ENCODE measurements at regions of chr6 and their contacts with region 1.

Region 1: DNA sequence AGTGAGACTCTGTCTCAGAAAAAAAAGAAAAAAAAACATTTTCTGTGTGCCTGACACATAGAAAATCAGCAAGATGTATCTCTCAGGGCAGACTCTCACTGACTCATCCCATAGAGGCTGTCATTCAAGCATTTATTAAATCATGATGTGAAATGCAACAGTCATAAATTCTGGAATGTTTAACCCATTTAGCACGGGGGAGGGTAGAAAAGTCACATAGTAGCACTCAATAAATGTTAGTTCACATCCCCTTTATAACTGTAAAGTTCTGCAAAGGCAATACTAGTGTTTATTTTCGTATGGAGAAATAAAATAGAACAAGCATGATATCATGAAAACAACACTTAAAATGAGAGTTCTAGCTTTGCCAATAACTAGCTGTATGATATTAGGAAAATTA is 15.5 kb upstream of the CARMIL1 start:
- H3K4me3 ChIP-seq: no peak overlapping the region
- H3K27ac ChIP-seq: no peak overlapping the region
- H3K4me1 ChIP-seq: no peaks in the 10 kb centered on the region; the same call in 1 of the 2 replicates
- CTCF ChIP-seq: no peak

Region 2: GRCh38 chr6:24855395-24856245 is 408.0 kb before region 1 on chr6:
- CTCF ChIA-PET with region 1: no interaction called
- POLR2A ChIA-PET with region 1: no interaction called
- H3K4me3 ChIP-seq: no peak overlapping the region
- H3K27ac ChIP-seq: no peak overlapping the region
- H3K4me1 ChIP-seq: no peaks in the 10 kb centered on the region
- CTCF ChIP-seq: peak; percentile 67; the same call in 1 of the 2 replicates

Region 3: GRCh38 chr6:24991810-24992467 is 271.7 kb before region 1 on chr6:
- CTCF ChIA-PET with region 1: no interaction called
- POLR2A ChIA-PET with region 1: no interaction called
- H3K4me3 ChIP-seq: no peak overlapping the region
- H3K27ac ChIP-seq: no peak overlapping the region
- H3K4me1 ChIP-seq: no peaks in the 10 kb centered on the region
- CTCF ChIP-seq: peak; percentile 50; the same call in 1 of the 2 replicates

Region 4: GRCh38 chr6:25179051-25179778 is 84.4 kb before region 1 on chr6:
- CTCF ChIA-PET with region 1: no interaction called
- POLR2A ChIA-PET with region 1: no interaction called
- H3K4me3 ChIP-seq: no peak overlapping the region
- H3K27ac ChIP-seq: no peak overlapping the region
- H3K4me1 ChIP-seq: peaks cover 3% of the 10 kb centered on the region; the same call in 1 of the 2 replicates
- CTCF ChIP-seq: no peak

Region 5: GRCh38 chr6:25193460-25194171 is 70.0 kb before region 1 on chr6:
- CTCF ChIA-PET with region 1: no interaction called
- POLR2A ChIA-PET with region 1: no interaction called
- H3K4me3 ChIP-seq: no peak overlapping the region
- H3K27ac ChIP-seq: no peak overlapping the region; the same call in 1 of the 2 replicates
- H3K4me1 ChIP-seq: peaks cover 25% of the 10 kb centered on the region
- CTCF ChIP-seq: no peak

Region 6: GRCh38 chr6:25250878-25251277 is 12.8 kb before region 1 on chr6:
- CTCF ChIA-PET with region 1: interaction called, 35 read pairs
- POLR2A ChIA-PET with region 1: no interaction called
- H3K4me3 ChIP-seq: no peak overlapping the region
- H3K27ac ChIP-seq: no peak overlapping the region
- H3K4me1 ChIP-seq: peaks cover 17% of the 10 kb centered on the region; the same call in 1 of the 2 replicates
- CTCF ChIP-seq: no peak

Region 7: GRCh38 chr6:25312703-25313501 is 49.2 kb after region 1 on chr6:
- CTCF ChIA-PET with region 1: interaction called, 15 read pairs
- POLR2A ChIA-PET with region 1: no interaction called
- H3K4me3 ChIP-seq: no peak overlapping the region
- H3K27ac ChIP-seq: no peak overlapping the region
- H3K4me1 ChIP-seq: peaks cover 22% of the 10 kb centered on the region
- CTCF ChIP-seq: peak; percentile 23; the same call in 1 of the 2 replicates

Region 8: DNA sequence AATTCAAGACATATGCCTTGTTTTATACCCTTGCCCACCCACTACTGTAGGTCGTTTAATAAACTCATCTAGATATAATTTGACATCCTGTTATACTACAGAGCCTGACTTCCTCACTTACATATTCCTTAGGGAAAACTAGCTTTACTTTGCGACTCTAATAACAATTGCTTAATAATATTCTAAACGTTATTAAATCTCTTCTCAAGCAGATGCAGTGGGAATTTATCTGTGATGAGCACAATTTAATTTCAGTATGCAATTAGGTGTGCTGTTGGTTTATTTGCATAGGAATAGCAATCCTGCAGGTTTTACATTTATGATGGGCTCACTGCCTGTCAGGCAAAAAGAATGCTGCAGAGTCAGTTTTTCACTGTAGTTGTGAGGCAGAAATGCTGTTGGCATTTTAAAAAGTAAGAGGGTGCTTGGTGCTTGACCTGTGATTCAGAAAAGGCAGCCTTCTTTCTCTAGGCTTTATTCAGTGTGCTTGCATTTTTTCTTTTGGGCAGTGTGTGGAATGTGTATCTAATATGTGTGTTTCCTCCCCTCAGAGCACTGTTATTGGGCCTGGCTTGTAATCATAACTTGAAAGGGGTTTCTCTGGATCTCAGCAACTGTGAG is 236.1 kb after region 1 on chr6:
- CTCF ChIA-PET with region 1: interaction called, 13 read pairs
- POLR2A ChIA-PET with region 1: no interaction called
- H3K4me3 ChIP-seq: no peak overlapping the region
- H3K27ac ChIP-seq: no peak overlapping the region
- H3K4me1 ChIP-seq: no peaks in the 10 kb centered on the region; the same call in 1 of the 2 replicates
- CTCF ChIP-seq: no peak

Region 9: DNA sequence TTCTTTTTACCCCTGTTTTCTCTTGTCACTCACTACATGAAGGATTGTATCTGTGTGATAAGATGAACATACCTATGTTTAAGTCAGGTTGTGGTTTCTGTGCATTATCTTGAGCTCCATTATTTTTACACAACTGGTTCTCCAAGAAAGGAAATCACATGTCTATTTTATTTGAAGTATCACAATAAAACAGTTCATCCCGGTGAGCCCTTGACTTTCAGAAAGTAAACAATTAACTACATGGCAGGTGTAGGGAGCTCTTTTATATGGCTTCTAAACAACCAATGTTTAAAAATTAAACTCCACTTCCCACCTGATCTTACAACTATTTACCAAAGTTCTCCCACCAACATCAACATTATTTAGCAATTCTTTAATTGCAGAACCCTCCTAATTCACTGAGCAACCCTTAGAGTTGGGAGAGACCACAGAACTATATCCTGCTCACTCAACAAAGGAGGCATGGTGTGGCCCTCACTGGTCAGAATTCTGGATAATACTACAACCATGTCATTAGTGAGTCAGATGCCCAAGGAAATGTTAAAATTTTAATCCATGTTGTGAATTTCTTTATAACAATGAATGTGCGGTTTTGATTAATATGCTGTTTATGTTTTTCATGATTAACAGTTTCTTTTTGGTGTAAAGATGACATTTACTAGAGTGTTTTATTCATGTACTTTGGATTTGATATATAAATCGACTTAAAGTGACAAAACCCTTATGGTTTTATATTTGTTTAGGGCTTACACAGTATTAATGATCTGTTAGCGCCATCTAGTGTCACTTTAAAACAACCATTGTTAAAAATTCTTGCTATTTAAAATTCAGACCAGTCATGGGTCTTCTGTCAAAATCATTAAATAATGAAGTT is 338.4 kb after region 1 on chr6:
- CTCF ChIA-PET with region 1: interaction called, 32 read pairs
- POLR2A ChIA-PET with region 1: no interaction called
- H3K4me3 ChIP-seq: no peak overlapping the region
- H3K27ac ChIP-seq: no peak overlapping the region
- H3K4me1 ChIP-seq: no peaks in the 10 kb centered on the region
- CTCF ChIP-seq: peak; percentile 28; the same call in 1 of the 2 replicates

Measured in HEK293 (cell line).